Endothelial cell of umbilical vein (primary cell): ENCODE measurements at regions of chr2 and their contacts with region 1.

Region 1: DNA sequence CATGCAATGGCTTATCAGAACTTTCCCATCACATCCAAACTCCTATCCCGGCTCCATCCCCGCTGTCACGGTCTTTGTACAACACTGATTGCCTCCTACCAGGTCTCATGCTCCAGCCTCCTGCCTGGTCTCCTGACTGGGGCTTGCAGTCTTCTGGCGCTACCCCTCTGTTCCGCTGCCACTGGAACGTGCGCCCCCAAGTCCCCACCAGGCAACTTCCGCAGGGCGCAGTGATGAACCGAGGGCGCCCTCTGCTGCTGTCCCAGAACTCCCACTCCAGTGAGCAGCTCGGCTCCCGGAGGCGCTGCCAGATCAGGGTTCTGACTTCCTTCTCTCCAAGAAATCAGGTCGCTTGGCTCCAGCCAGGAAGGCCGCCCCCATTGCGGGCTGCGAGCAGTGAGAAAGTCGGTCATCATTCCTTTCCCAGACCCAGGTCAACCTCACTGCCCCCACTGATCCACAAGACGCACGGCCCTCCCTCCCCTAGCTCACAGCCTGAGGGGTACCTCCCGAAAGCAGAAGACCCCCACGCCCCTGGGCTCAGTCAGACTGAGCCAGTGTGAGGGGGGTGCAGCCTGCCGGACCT is 43.9 kb upstream of the RAB11FIP5 start:
- DNase-seq: peak; percentile 63
- H3K4me3 ChIP-seq: no peak overlapping the region
- H3K27ac ChIP-seq: no peak overlapping the region
- H3K4me1 ChIP-seq: peaks cover 4% of the 10 kb centered on the region
- H3K27me3 ChIP-seq: no peaks in the 10 kb centered on the region
- CTCF ChIP-seq: peak; percentile 78 to 93
- POLR2A ChIP-seq: no peak

Region 2: DNA sequence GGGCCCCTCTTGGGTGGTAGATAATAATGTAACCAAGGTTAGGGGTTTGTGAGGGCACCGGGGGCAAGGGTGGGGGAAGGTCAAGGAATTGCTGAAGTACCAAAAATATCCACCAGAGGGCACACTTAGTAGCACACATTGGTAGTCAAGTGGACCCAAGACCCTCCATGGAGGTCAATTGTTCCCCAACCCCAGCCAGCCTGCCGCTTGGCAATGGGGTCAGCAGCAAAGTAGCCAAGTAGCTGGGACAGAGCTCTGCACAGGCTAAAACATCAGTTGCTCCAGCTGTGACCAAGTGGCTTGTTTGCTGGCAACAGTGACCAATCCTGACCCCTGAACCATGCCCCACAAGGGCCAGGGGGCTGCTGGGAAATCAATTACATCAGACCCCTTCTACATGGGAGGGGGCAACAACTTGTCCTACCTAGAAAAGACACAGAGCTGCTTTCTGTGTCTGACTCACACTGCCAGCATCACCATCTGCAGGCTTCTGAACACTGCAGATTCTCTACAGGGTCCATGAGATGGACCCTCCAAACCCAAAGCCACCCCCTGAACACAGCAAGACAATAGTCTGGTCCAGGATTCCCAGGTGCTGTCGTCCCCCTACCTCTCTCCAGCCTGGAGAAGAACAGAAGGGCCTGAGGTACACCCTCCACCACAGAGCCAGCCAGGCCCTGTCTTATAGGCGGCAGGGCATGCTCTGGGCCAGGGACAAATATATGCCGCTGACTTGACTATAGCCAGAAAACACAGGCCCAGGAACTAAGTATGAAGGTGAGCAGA is 163.3 kb before region 1 on chr2:
- CTCF ChIA-PET with region 1: interaction called, 32 read pairs
- POLR2A ChIA-PET with region 1: no interaction called
- dilution Hi-C with region 1: no loop called
- intact Hi-C with region 1: loop called (anchors 1 kb)
- DNase-seq: peak; percentile 51
- H3K4me3 ChIP-seq: no peak overlapping the region
- H3K27ac ChIP-seq: no peak overlapping the region
- H3K4me1 ChIP-seq: no peaks in the 10 kb centered on the region
- H3K27me3 ChIP-seq: no peaks in the 10 kb centered on the region
- CTCF ChIP-seq: peak; percentile 57 to 70
- POLR2A ChIP-seq: no peak

Region 3: GRCh38 chr2:73063909-73064875 is 92.4 kb before region 1 on chr2:
- CTCF ChIA-PET with region 1: interaction called, 11 read pairs
- POLR2A ChIA-PET with region 1: no interaction called
- dilution Hi-C with region 1: no loop called
- intact Hi-C with region 1: no loop called
- DNase-seq: peak; percentile 76
- H3K4me3 ChIP-seq: no peak overlapping the region
- H3K27ac ChIP-seq: peak overlapping the region; percentile 79
- H3K4me1 ChIP-seq: peaks cover 23% of the 10 kb centered on the region
- H3K27me3 ChIP-seq: no peaks in the 10 kb centered on the region
- CTCF ChIP-seq: no peak
- POLR2A ChIP-seq: no peak

Region 4: GRCh38 chr2:73091164-73091563 is 65.5 kb before region 1 on chr2:
- CTCF ChIA-PET with region 1: interaction called, 208 read pairs
- POLR2A ChIA-PET with region 1: no interaction called
- dilution Hi-C with region 1: no loop called
- intact Hi-C with region 1: no loop called
- DNase-seq: no peak
- H3K4me3 ChIP-seq: no peak overlapping the region
- H3K27ac ChIP-seq: no peak overlapping the region
- H3K4me1 ChIP-seq: peaks cover 25% of the 10 kb centered on the region
- H3K27me3 ChIP-seq: no peaks in the 10 kb centered on the region
- CTCF ChIP-seq: no peak
- POLR2A ChIP-seq: no peak

Region 5: GRCh38 chr2:73112913-73113633 is 43.6 kb before region 1 on chr2 and contains the start of gene RAB11FIP5:
- CTCF ChIA-PET with region 1: interaction called, 35 read pairs
- POLR2A ChIA-PET with region 1: no interaction called
- dilution Hi-C with region 1: no loop called
- intact Hi-C with region 1: loop called (anchors 2 kb)
- DNase-seq: peak; percentile 70
- H3K4me3 ChIP-seq: peak within 1 kb of the TSS; percentile 73 to 76 (median 74)
- H3K27ac ChIP-seq: peak within 1 kb of the TSS; percentile 60
- H3K4me1 ChIP-seq: peaks cover 16% of the 10 kb centered on the region
- H3K27me3 ChIP-seq: no peaks in the 10 kb centered on the region
- CTCF ChIP-seq: no peak
- POLR2A ChIP-seq: peak; percentile 55
- total RNA-seq, gene RAB11FIP5: 47.0 and 49.4 TPM in 2 replicates

Region 6: DNA sequence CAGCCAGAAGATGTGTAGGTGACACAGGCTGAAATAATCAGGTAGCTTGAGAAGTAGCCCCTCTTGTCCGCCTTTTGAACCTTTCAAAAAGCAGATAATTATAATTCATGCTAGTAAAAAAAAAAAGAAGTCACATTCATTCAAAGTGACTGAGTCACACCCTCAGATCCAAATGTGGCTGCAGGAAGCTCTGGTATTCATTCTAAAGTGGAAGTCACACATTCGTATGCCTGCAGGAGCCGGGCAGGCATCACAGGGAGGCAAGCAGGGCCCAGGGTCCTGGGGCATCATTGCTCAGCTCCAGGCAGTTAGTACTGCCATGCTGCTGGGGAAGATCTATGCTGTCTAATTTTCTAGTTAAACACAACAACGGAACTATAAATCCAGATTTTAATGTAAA is 22.2 kb before region 1 on chr2:
- CTCF ChIA-PET with region 1: interaction called, 11 read pairs
- POLR2A ChIA-PET with region 1: no interaction called
- dilution Hi-C with region 1: no loop called
- intact Hi-C with region 1: no loop called
- DNase-seq: no peak
- H3K4me3 ChIP-seq: no peak overlapping the region
- H3K27ac ChIP-seq: peak overlapping the region; percentile 22
- H3K4me1 ChIP-seq: peaks cover 15% of the 10 kb centered on the region
- H3K27me3 ChIP-seq: peaks cover 0 to 2% of the 10 kb centered on the region in 2 experiments
- CTCF ChIP-seq: no peak
- POLR2A ChIP-seq: no peak